ENCODE measurements at regions of chr20 and their contacts with region 1.

Region 1: GRCh38 chr20:40990542-40991120 is 38.0 kb upstream of the TOP1 start:
- DNase-seq: peak; percentile 85

Region 2: DNA sequence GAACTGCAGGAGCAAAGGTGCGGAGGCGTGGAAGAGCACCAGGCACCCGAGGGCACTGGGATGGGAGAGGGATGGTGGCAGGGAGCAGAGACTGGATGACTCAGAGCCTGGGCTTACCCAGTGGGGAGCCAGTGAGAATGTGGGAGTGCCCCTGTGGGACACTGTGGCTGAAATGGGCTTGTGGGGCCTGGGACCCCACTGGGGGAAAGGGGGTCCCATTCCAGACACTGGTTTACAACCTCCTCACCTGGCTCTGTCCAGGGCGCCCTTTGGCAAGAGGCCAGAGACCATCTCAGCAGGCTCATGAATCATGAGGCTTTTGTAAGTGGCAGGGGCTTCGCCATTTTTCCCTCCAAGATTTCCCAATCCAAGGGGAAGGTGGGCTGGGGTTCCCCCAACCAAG is 177.6 kb before region 1 on chr20:
- intact Hi-C with region 1: no loop called
- DNase-seq: no peak

Region 3: GRCh38 chr20:40913224-40914185 is 77.1 kb before region 1 on chr20:
- intact Hi-C with region 1: no loop called
- DNase-seq: no peak

Region 4: DNA sequence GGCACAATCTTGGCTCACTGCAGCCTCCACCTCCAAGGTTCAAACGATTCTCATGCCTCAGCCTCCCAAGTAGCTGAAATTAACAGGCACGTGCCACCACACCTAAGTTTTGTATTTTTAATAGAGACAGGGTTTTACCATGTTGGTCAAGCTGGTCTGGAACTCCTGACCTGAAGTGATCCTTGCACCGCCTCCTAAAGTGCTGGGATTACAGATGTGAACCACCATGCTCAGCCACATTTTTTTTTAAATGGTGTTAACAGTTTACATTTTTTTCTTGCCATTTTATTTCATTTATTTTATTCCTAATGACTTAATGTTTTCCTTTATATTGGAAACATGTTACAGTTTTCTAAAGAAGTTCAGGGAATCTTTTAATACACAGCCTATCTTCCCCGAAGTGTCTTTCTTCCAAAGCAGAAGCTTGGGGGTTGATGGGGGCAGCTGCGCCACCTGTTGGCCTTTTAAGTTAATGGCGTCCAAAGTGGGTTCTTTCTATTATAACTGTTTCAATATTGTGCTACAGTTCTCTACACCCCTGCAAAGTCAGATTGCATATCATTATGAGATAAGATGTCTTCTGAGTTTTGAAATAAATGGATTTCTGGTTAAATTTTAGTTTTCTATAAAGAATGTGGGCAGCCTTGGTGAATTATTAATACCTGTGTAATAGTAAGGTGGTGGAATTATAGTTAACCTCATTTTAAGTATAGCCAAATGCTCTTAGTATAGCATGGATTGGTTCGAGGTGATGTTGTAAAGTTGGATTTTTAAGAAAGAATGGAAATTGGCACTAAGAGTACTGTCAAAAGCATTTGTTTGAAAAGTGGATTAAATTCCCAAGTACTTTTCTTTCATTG is 104.7 kb after region 1 on chr20:
- intact Hi-C with region 1: loop called (anchors 2 kb)
- DNase-seq: peak; percentile 79

Region 5: DNA sequence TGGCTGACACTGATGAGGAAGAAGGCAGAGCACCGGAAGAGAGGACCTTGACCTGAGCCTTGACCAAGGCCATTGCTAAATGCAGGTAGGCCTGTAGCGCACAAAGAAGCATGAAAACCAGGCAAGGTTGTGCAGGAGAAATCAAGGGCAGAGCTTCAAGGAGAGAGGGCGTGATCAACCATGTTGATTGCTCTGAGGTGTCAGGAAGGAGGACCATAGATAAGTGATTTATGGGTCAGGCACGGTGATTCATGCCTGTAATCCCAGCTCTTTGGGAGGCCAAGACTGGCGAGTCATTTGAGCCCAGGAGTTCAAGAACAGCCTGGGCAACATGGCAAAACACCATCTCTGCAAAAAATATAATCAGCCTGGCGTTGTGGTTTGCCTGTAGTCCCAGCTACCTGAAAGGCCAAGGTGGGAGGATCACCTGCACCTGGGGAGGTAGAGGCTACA is 159.1 kb after region 1 on chr20:
- intact Hi-C with region 1: no loop called
- DNase-seq: no peak

Measured in cardiac septum (tissue), 1 donor.